ENCODE measurements at regions of chr19 and their contacts with region 1.

Region 1: DNA sequence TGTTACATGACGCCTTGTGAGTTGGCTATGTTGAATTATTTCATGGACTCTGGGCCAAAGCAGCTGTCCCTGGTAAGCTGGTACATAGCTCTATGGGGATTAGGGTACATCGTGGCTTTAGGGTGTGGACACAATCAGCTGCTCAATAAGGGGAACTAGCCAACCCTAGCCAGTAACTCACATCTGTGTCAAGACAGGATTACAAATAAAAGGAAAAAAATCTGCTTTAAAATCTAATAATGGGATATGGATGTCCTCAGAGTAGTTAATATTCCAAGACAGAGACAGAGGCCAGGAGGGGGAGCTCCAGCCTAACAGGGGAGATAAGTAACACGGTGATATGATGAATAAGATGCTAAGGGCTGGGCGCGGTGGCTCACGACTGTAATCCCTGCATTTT is 21.1 kb upstream of the ZNF766 start:
- DNase-seq: peak; percentile 69
- H3K4me3 ChIP-seq: no peak overlapping the region
- H3K27ac ChIP-seq: no peak overlapping the region
- H3K4me1 ChIP-seq: no peaks in the 10 kb centered on the region
- H3K27me3 ChIP-seq: no peaks in the 10 kb centered on the region
- CTCF ChIP-seq: peak; percentile 62

Region 2: GRCh38 chr19:52214186-52214585 is 34.1 kb before region 1 on chr19:
- CTCF ChIA-PET with region 1: no interaction called
- POLR2A ChIA-PET with region 1: no interaction called
- intact Hi-C with region 1: no loop called
- DNase-seq: no peak
- H3K4me3 ChIP-seq: no peak overlapping the region
- H3K27ac ChIP-seq: no peak overlapping the region
- H3K4me1 ChIP-seq: no peaks in the 10 kb centered on the region
- H3K27me3 ChIP-seq: no peaks in the 10 kb centered on the region
- CTCF ChIP-seq: no peak

Region 3: GRCh38 chr19:52665529-52665928 is 417.3 kb after region 1 on chr19:
- CTCF ChIA-PET with region 1: no interaction called
- POLR2A ChIA-PET with region 1: no interaction called
- intact Hi-C with region 1: no loop called
- DNase-seq: no peak
- H3K4me3 ChIP-seq: no peak overlapping the region
- H3K27ac ChIP-seq: no peak overlapping the region
- H3K4me1 ChIP-seq: no peaks in the 10 kb centered on the region
- H3K27me3 ChIP-seq: no peaks in the 10 kb centered on the region
- CTCF ChIP-seq: no peak

Region 4: DNA sequence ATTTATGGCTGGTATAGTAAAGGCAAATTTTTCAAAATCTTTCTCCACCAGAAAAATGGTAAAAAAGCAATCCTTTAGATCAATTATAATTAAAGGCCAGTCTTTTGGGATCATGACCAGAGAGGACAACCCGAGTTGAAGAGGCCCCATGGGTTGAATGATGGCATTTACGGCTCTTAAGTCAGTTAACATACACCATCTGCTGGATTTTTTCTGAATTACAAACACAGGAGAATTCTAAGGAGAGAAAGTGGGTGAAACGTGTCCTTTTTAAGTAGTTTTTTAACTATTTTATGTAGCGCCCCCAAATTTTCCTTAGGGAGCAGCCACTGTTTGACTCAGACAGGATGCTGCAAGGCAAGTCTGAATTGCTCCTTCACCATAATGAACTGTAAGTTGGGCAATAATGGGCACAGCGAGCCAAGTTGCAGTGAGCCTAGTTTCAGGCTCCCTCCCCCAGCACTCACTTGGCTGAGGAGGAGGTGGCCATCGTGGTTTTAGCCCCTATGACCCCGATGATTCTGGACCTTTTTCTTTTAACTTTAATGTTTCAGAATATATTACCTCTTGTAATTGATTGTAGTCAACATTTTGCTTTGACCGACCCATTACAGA is 500.2 kb after region 1 on chr19:
- CTCF ChIA-PET with region 1: no interaction called
- POLR2A ChIA-PET with region 1: no interaction called
- intact Hi-C with region 1: loop called (anchors 1 kb)
- DNase-seq: peak; percentile 41
- H3K4me3 ChIP-seq: no peak overlapping the region
- H3K27ac ChIP-seq: no peak overlapping the region
- H3K4me1 ChIP-seq: no peaks in the 10 kb centered on the region
- H3K27me3 ChIP-seq: no peaks in the 10 kb centered on the region
- CTCF ChIP-seq: peak; percentile 45